CD8-positive, alpha-beta memory T cell (primary cell): ENCODE measurements at regions of chr13 and their contacts with region 1.

Region 1: DNA sequence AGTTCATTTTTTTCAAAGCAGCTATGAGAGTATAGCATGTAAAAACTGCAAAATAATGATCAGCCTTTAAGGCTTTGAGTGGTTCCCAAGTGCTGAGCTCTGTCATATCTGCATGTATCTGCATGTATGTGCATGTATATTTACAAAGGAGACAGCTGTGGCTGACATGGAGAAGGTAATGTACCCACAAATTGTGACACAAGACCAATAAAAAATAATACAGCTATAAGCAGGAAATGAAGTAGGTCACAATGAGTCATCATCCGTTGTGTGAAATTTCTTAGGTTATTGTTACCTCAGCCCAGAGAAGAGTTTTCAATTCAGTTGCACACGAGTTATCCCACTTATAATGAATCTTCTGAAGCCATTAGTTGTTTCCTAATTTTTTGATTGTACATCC is 60.9 kb upstream of the MED4 start:
- DNase-seq: peak; percentile 2 to 76 (median 65)
- H3K4me3 ChIP-seq: peak overlapping the region; percentile 19
- H3K4me3 Mint-ChIP-seq: peak overlapping the region; percentile 25 to 89 (median 77)
- H3K27ac ChIP-seq: peak overlapping the region; percentile 60
- H3K27ac Mint-ChIP-seq: peak overlapping the region; percentile 78 to 98 (median 88)
- H3K4me1 ChIP-seq: peaks cover 72% of the 10 kb centered on the region
- H3K4me1 Mint-ChIP-seq: peaks cover 66 to 87% (median 84%) of the 10 kb centered on the region in 3 donors
- H3K27me3 ChIP-seq: no peaks in the 10 kb centered on the region
- H3K27me3 Mint-ChIP-seq: no peaks in the 10 kb centered on the region

Region 2: GRCh38 chr13:48126944-48127830 is 28.7 kb before region 1 on chr13:
- CTCF ChIA-PET with region 1: interaction called, 16 read pairs
- POLR2A ChIA-PET with region 1: interaction called, 7 read pairs
- DNase-seq: peak in 4 of 5 donors; percentile 5 to 79 (median 66)
- H3K4me3 ChIP-seq: peak overlapping the region; percentile 16
- H3K4me3 Mint-ChIP-seq: peak overlapping the region in 6 of 7 donors; percentile 10 to 50 (median 37)
- H3K27ac ChIP-seq: no peak overlapping the region
- H3K27ac Mint-ChIP-seq: peak overlapping the region; percentile 61 to 88 (median 79)
- H3K4me1 ChIP-seq: peaks cover 12% of the 10 kb centered on the region
- H3K4me1 Mint-ChIP-seq: peaks cover 12 to 28% (median 22%) of the 10 kb centered on the region in 3 donors
- H3K27me3 ChIP-seq: no peaks in the 10 kb centered on the region
- H3K27me3 Mint-ChIP-seq: peaks cover 0 to 2% of the 10 kb centered on the region in 2 donors

Region 3: GRCh38 chr13:48144413-48145035 is 11.3 kb before region 1 on chr13:
- CTCF ChIA-PET with region 1: no interaction called
- POLR2A ChIA-PET with region 1: no interaction called
- DNase-seq: peak in 1 of 5 donors; percentile 37
- H3K4me3 ChIP-seq: no peak overlapping the region
- H3K4me3 Mint-ChIP-seq: peak overlapping the region in 2 of 7 donors; percentile 49 to 52
- H3K27ac ChIP-seq: no peak overlapping the region
- H3K27ac Mint-ChIP-seq: peak overlapping the region; percentile 31 to 90 (median 66)
- H3K4me1 ChIP-seq: peaks cover 11% of the 10 kb centered on the region
- H3K4me1 Mint-ChIP-seq: peaks cover 24 to 45% (median 25%) of the 10 kb centered on the region in 3 donors
- H3K27me3 ChIP-seq: no peaks in the 10 kb centered on the region
- H3K27me3 Mint-ChIP-seq: no peaks in the 10 kb centered on the region

Region 4: DNA sequence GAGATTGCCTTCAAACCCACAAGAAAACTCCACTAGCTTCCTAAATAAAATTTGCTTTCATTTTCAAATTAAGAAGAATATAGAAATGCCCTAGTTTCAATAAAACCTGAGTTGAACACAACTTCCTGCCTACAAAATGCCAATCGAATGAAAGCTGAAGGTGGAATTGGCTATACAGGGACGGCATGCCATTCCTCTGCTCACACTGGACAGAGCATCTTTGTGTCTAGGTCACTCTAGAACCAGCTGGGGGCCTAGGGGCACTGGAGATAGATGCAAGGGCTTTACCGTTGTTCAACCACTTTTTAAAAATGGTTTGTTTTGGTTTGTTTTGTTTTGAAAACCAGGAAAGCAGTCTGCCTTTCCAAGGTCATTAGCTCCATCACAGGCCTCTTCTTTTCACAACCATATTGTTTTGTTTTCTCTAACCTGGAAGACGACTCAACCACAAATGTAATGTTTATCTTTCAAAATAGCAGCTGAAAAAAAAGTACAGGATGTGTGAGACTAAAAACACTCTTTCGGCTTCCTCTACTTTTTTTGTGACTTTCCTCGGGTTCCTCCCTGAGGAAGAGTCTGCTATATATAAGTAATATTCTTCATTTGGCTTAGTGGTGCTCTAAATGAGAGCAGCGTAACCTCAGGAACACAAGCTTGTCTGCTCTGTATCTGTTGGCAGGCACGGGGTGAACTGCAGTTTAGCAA is 65.3 kb after region 1 on chr13:
- CTCF ChIA-PET with region 1: interaction called, 6 read pairs
- POLR2A ChIA-PET with region 1: interaction called, 15 read pairs
- DNase-seq: peak in 2 of 5 donors; percentile 38 to 56
- H3K4me3 ChIP-seq: peak overlapping the region; percentile 49
- H3K4me3 Mint-ChIP-seq: peak overlapping the region; percentile 59 to 84 (median 78)
- H3K27ac ChIP-seq: peak overlapping the region; percentile 26
- H3K27ac Mint-ChIP-seq: peak overlapping the region; percentile 88 to 99 (median 94)
- H3K4me1 ChIP-seq: peaks cover 54% of the 10 kb centered on the region
- H3K4me1 Mint-ChIP-seq: peaks cover 46 to 64% (median 63%) of the 10 kb centered on the region in 3 donors
- H3K27me3 ChIP-seq: no peaks in the 10 kb centered on the region
- H3K27me3 Mint-ChIP-seq: no peaks in the 10 kb centered on the region